ENCODE measurements at regions of chr19 and their contacts with region 1.

Region 1: GRCh38 chr19:14405758-14406644 is 13.1 kb downstream of the DDX39A start:
- DNase-seq: peak; percentile 63
- H3K4me3 ChIP-seq: peak overlapping the region in 1 of 3 experiments; percentile 38
- H3K27ac ChIP-seq: no peak overlapping the region
- H3K4me1 ChIP-seq: peaks cover 4% of the 10 kb centered on the region
- H3K27me3 ChIP-seq: no peaks in the 10 kb centered on the region
- CTCF ChIP-seq: peak; percentile 44 to 84

Region 2: DNA sequence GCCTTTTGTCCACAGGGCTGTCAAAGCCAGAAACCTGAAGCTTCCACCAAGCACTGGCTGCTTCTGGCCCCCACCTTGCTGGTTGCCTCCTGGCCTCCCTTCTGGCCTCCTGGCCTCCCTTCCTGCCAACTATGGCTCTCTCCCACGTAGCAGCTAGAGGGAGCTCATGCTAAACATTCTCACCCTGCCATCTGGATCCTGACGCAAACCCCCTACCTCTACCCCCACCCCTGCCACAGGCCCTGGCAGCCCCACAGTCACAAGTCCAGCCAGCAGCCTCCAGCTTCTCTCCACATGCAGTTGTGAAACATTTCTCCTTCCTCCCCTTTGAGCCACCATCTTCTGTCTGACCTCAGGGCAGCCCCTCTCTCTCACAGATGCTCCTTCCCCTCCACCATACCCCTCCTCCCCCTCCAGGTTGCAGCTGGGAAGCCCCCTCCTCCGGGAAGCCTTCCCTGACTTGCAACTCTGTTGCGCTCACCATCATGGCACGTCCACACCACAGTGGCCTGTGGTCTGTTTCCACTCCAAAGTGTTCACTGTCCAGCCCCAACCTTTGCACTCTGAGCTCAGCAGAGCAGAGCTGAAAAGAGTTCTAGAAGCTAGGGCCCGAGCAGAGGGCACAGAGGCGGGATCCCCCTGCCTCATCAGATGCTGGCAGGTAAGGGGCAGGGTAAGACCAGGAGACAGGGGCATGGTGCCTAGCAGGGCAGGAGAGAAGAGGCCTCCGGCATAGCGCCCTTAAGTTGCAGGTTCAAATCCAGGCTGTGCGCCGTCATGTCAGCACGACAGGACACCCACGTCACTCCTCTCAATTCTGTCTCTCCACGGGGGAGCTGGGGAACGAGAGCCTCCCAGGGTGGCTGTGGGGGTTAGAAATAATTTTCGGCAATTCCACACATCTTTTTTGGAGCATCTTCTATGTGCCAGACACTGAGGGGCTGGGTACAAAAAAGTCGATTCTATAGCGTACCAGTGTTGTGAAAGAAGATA is 207.3 kb before region 1 on chr19:
- CTCF ChIA-PET with region 1: interaction called, 8 read pairs
- dilution Hi-C with region 1: loop called (anchors 5 kb)
- in situ Hi-C with region 1: no loop called
- intact Hi-C with region 1: loop called (anchors 1 kb)
- DNase-seq: no peak
- H3K4me3 ChIP-seq: no peak overlapping the region
- H3K27ac ChIP-seq: no peak overlapping the region
- H3K4me1 ChIP-seq: no peaks in the 10 kb centered on the region
- H3K27me3 ChIP-seq: peaks cover 2% of the 10 kb centered on the region
- CTCF ChIP-seq: peak in 1 of 2 donors; percentile 16

Region 3: GRCh38 chr19:14218620-14219330 is 187.2 kb before region 1 on chr19:
- CTCF ChIA-PET with region 1: interaction called, 4 read pairs
- dilution Hi-C with region 1: no loop called
- in situ Hi-C with region 1: no loop called
- intact Hi-C with region 1: loop called (anchors 2 kb)
- DNase-seq: no peak
- H3K4me3 ChIP-seq: no peak overlapping the region
- H3K27ac ChIP-seq: no peak overlapping the region
- H3K4me1 ChIP-seq: no peaks in the 10 kb centered on the region
- H3K27me3 ChIP-seq: no peaks in the 10 kb centered on the region
- CTCF ChIP-seq: no peak

Region 4: DNA sequence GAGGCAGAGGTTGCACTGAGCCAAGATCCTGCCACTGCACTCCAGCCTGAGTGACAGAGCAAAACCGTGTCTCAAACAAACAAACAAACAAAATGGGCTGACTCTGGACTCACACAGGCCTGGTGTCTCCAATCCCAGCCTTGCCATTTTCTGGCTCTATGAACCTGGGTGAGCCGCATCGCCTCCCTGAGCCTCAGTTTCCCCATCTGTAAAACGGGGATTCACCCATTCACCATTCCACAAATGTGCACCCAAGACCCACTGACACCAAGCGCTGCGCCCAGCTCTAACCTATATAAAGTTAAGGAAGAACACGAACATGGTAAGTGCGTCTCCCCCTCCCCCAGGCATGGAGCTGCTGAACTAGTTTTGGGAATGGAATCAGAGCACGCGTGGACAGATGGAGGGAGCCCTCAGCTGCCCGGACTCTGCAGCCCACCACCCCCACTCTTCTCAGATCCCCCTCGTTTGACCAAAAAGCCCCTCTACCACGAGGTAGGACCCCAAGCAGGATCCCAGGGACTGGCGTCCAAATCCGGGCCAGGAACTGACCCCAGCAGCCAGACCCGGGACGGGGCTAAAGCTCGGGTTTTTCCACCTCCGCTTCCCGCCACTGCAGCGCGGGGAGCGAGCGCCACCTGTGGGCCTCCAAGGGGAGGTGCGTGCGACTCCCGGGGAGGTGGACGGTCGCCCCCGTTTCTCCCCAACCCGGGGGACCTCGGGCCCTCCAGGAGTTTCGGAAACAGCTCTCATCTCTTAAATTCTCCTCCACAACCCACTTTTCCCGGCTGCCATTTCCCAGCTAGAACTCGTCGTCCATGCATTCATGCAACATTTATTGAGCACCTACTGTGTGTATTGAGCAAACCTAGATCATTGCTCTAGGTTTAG is 57.8 kb before region 1 on chr19:
- CTCF ChIA-PET with region 1: no interaction called
- dilution Hi-C with region 1: no loop called
- in situ Hi-C with region 1: no loop called
- intact Hi-C with region 1: loop called (anchors 2 kb)
- DNase-seq: peak; percentile 26
- H3K4me3 ChIP-seq: peak overlapping the region in 1 of 3 experiments; percentile 22
- H3K27ac ChIP-seq: no peak overlapping the region
- H3K4me1 ChIP-seq: no peaks in the 10 kb centered on the region
- H3K27me3 ChIP-seq: peaks cover 2% of the 10 kb centered on the region
- CTCF ChIP-seq: peak; percentile 77 to 98

Region 5: DNA sequence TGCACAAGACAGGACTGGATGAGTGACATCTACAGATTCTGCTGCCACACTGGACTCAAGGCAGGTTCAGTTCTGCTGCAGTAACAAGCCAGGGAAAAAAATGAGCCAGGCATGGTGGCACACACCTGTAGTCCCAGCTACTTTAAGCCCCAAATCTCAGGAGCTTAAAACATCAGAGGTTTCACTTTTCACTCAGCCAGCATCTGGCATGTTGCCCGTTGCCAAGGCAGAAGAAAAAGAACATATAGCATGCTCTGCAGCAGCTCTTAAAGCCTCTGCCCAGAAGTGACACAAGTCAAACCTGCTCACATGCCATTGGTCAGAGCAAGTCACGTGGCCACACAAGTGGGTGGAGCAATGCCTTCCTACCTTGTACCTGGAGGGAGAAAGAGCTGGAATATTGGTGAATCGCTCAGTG is 39.5 kb before region 1 on chr19:
- CTCF ChIA-PET with region 1: interaction called, 9 read pairs
- dilution Hi-C with region 1: no loop called
- in situ Hi-C with region 1: no loop called
- intact Hi-C with region 1: loop called (anchors 1 kb)
- DNase-seq: peak; percentile 87
- H3K4me3 ChIP-seq: no peak overlapping the region
- H3K27ac ChIP-seq: no peak overlapping the region
- H3K4me1 ChIP-seq: peaks cover 7% of the 10 kb centered on the region
- H3K27me3 ChIP-seq: no peaks in the 10 kb centered on the region
- CTCF ChIP-seq: no peak

Region 6: GRCh38 chr19:14383661-14384555 is 22.1 kb before region 1 on chr19:
- CTCF ChIA-PET with region 1: no interaction called
- dilution Hi-C with region 1: no loop called
- in situ Hi-C with region 1: no loop called
- intact Hi-C with region 1: loop called (anchors 2 kb)
- DNase-seq: peak; percentile 44
- H3K4me3 ChIP-seq: no peak overlapping the region
- H3K27ac ChIP-seq: no peak overlapping the region
- H3K4me1 ChIP-seq: peaks cover 35% of the 10 kb centered on the region
- H3K27me3 ChIP-seq: no peaks in the 10 kb centered on the region
- CTCF ChIP-seq: no peak

Region 7: GRCh38 chr19:14419106-14419813 is 13.3 kb after region 1 on chr19 and contains the start of gene DDX39A:
- CTCF ChIA-PET with region 1: interaction called, 27 read pairs
- dilution Hi-C with region 1: no loop called
- in situ Hi-C with region 1: no loop called
- intact Hi-C with region 1: no loop called
- DNase-seq: peak; percentile 99
- H3K4me3 ChIP-seq: peak within 1 kb of the TSS; percentile 80 to 98 (median 94)
- H3K27ac ChIP-seq: peak within 1 kb of the TSS; percentile 80
- H3K4me1 ChIP-seq: peaks cover 17% of the 10 kb centered on the region
- H3K27me3 ChIP-seq: no peaks in the 10 kb centered on the region
- CTCF ChIP-seq: no peak
- total RNA-seq, gene DDX39A: 34.0 to 74.4 TPM

Region 8: DNA sequence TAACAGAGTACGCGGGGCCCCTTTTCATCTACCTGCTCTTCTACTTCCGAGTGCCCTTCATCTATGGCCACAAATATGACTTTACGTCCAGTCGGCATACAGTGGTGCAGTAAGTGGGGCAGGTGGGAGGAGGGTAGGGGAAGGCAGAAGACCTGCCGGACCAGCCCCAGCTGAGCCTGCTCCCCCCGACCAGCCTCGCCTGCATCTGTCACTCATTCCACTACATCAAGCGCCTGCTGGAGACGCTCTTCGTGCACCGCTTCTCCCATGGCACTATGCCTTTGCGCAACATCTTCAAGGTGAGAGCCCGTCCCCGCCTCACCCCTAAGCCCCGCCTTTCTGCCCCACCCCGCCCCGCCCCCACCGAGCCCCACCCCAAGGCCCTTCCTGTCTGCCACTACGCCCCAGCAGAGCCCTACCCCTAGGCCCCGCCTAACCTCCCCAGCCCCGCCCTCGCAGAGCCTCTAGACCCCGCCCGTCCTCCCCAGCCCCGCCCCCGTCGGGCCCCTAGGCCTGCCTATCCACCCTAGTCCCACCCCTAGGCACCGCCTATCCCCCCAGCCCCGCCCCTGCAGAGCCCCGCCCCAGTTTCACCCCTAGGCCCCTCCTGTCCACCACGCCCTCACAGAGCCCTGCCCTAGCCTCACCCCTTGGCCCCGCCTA is 158.1 kb after region 1 on chr19:
- CTCF ChIA-PET with region 1: no interaction called
- dilution Hi-C with region 1: no loop called
- in situ Hi-C with region 1: no loop called
- intact Hi-C with region 1: no loop called
- DNase-seq: peak; percentile 45
- H3K4me3 ChIP-seq: no peak overlapping the region
- H3K27ac ChIP-seq: no peak overlapping the region
- H3K4me1 ChIP-seq: peaks cover 46% of the 10 kb centered on the region
- H3K27me3 ChIP-seq: no peaks in the 10 kb centered on the region
- CTCF ChIP-seq: no peak

Measured in mammary epithelial cell (primary cell).